ENCODE measurements at regions of chr11 and their contacts with region 1.

Region 1: DNA sequence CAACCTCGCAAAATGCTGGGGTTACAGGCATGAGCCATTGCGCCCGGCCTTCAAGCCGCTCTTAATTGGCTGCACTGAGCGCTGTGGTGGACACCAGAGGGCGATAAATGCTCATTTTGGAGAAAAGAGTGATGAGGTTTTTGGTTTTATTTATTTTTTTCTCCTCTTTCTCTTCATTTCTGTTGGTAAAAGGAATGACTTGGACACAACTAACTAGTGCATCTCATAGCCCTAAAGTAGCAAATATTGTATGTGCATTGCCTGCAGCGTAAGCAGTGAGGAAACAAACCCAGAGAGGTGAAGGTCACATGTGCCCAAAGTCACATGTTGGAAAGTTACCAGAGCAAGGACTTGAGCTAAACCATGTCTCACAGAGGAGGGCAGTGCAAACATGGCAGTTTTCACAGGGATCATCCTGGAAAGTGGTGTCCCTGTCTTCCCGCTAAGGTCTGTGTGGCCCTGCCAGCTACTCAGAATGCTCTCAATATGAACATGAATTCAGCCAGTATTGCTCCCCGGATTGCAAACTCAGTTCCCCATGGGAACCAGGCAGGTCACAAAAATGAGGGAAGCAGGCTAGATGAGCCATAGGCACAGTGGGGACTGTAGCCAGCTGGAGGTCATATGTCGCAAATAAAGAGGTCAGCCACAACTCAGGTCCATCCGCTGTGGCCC is 8.6 kb upstream of the CD82 start:
- DNase-seq: peak; percentile 79
- H3K4me3 Mint-ChIP-seq: no peak overlapping the region
- H3K27ac Mint-ChIP-seq: no peak overlapping the region
- H3K4me1 Mint-ChIP-seq: peaks cover 29% of the 10 kb centered on the region
- H3K27me3 Mint-ChIP-seq: no peaks in the 10 kb centered on the region

Region 2: DNA sequence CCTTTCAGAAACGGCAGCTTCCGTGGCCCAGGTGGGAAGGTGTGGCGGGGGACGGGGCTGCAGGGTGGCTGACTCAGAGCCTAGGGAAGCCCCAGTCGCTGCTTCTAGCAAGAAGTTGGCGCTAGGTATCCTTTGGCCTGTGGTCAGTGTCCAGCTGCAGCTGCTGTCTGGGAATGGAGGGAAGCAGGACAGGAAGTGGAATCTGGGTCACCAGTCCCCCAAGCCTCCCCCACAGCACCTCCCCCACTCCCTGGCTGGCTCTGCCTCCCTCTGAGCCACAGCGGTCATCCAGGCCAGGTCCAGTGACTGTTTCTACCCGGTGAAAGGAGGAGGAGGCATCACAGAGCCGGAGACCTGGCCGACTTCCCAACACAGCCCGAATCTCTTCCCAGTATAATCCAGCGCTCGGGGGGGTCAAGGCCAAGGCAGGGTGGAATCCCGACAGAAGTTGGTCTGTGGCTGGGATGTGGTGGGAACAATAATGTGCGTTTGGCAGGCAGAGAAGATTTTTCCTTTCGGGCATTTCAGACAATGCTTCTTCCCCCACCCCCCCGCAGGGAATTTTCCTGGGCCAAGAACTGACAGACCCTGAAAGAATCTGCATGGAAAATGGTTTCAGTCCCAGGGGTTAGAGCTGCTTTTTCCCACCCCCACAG is 569.4 kb before region 1 on chr11:
- CTCF ChIA-PET with region 1: no interaction called
- POLR2A ChIA-PET with region 1: no interaction called
- intact Hi-C with region 1: no loop called
- DNase-seq: no peak
- H3K4me3 Mint-ChIP-seq: no peak overlapping the region
- H3K27ac Mint-ChIP-seq: no peak overlapping the region
- H3K4me1 Mint-ChIP-seq: peaks cover 1% of the 10 kb centered on the region
- H3K27me3 Mint-ChIP-seq: peaks cover 20% of the 10 kb centered on the region

Region 3: DNA sequence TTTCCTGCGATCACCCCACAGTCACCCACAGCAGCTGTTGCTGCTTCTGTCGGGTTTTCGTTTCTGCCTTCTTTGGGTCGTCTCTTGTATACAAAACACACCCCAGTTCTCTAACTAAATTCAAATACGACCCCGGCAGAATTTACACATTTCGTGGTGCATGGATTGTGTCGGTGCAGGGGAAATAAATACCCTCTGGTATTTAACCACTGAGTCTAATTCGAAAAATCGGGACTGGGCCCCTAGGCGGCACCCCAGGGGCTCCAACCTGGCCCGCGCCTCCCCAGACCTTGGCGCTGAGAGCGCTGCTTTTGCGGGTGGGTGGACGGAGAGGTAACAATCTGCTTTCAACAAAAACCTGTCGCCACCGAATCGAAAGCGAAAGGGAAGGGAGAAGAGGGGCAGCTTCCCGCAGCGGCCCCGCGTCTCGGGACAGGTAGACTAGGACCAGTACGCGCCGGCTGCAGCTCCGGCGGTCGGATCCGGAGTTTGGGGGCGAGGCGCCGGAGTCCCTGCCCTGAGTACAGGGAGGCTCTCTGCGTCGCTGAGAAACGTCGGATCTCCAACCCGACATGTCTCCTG is 251.3 kb before region 1 on chr11:
- CTCF ChIA-PET with region 1: no interaction called
- POLR2A ChIA-PET with region 1: no interaction called
- intact Hi-C with region 1: no loop called
- DNase-seq: peak; percentile 56
- H3K4me3 Mint-ChIP-seq: peak overlapping the region; percentile 75
- H3K27ac Mint-ChIP-seq: no peak overlapping the region
- H3K4me1 Mint-ChIP-seq: peaks cover 31% of the 10 kb centered on the region
- H3K27me3 Mint-ChIP-seq: peaks cover 75% of the 10 kb centered on the region

Region 4: GRCh38 chr11:44398266-44399045 is 158.4 kb before region 1 on chr11:
- CTCF ChIA-PET with region 1: no interaction called
- POLR2A ChIA-PET with region 1: no interaction called
- intact Hi-C with region 1: no loop called
- DNase-seq: no peak
- H3K4me3 Mint-ChIP-seq: no peak overlapping the region
- H3K27ac Mint-ChIP-seq: no peak overlapping the region
- H3K4me1 Mint-ChIP-seq: peaks cover 2% of the 10 kb centered on the region
- H3K27me3 Mint-ChIP-seq: peaks cover 21% of the 10 kb centered on the region

Region 5: GRCh38 chr11:44434191-44434590 is 122.7 kb before region 1 on chr11:
- CTCF ChIA-PET with region 1: no interaction called
- POLR2A ChIA-PET with region 1: no interaction called
- intact Hi-C with region 1: no loop called
- DNase-seq: no peak
- H3K4me3 Mint-ChIP-seq: no peak overlapping the region
- H3K27ac Mint-ChIP-seq: no peak overlapping the region
- H3K4me1 Mint-ChIP-seq: no peaks in the 10 kb centered on the region
- H3K27me3 Mint-ChIP-seq: peaks cover 33% of the 10 kb centered on the region

Region 6: DNA sequence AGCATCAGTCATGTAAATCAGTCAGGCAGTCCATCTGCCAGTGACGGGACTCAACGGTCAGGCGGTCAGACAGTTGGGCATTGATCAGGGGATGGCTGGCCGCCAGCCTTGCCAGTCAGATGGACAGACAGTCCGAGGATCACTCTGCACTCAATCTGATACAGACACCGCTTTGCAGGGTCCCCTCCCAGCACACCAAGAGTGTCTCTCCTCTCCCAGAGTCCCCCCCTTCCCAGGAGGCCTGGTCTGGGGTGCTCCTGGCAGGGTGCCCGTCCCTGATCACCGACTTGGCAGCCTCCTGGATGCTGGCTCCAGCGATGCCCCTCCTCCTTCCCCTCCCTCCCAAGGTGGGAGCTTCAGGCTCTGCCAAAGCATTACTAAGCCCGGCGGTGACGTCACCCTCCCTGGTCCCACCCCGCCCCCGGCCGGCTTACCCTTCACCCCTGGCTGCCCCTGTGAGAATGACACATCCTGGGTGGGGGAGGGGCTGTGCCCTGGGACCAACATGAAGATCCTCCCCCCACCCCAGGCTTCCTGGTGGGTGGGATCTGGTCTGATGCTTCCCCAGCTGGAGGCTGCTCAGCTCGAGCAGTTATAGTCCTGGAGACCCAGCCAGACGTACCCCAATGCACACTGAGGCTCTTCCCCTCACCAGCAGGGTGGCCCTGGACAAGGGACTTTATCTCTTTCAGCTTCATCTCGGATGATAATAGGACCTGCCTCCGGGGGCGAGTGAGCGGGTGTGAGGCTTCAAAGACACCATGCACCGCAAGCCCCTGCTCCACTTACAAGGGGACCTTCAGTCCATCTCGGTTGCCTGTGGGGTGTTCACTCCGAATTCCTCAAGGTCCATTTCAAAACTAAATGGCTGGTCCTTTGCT is 77.8 kb after region 1 on chr11:
- CTCF ChIA-PET with region 1: interaction called, 13 read pairs
- POLR2A ChIA-PET with region 1: no interaction called
- intact Hi-C with region 1: loop called (anchors 1 kb)
- DNase-seq: peak; percentile 38
- H3K4me3 Mint-ChIP-seq: no peak overlapping the region
- H3K27ac Mint-ChIP-seq: no peak overlapping the region
- H3K4me1 Mint-ChIP-seq: peaks cover 8% of the 10 kb centered on the region
- H3K27me3 Mint-ChIP-seq: peaks cover 4% of the 10 kb centered on the region

Measured in activated CD4-positive, alpha-beta memory T cell treated with anti-CD3 and anti-CD28 coated beads for 36 hours (primary cell).